Thyroid gland (tissue), 4 donors: ENCODE measurements at regions of chr6 and their contacts with region 1.

Region 1: GRCh38 chr6:154738551-154738961 is 5.3 kb downstream of the SCAF8 start:
- DNase-seq: no peak
- H3K4me3 ChIP-seq: no peak overlapping the region
- H3K27ac ChIP-seq: peak overlapping the region in 1 of 3 donors; percentile 7
- H3K4me1 ChIP-seq: peaks cover 58 to 66% of the 10 kb centered on the region in 2 donors
- H3K27me3 ChIP-seq: no peaks in the 10 kb centered on the region
- CTCF ChIP-seq: no peak
- POLR2A ChIP-seq: no peak

Region 2: GRCh38 chr6:154805288-154805911 is 66.8 kb after region 1 on chr6:
- intact Hi-C with region 1: loop called (anchors 5 kb)
- DNase-seq: no peak
- H3K4me3 ChIP-seq: no peak overlapping the region
- H3K27ac ChIP-seq: no peak overlapping the region
- H3K4me1 ChIP-seq: peaks cover 3 to 8% of the 10 kb centered on the region in 2 donors
- H3K27me3 ChIP-seq: no peaks in the 10 kb centered on the region
- CTCF ChIP-seq: peak in 5 of 6 experiments; percentile 10 to 64 (median 45)
- POLR2A ChIP-seq: no peak